ENCODE measurements at regions of chr14 and their contacts with region 1.

Region 1: DNA sequence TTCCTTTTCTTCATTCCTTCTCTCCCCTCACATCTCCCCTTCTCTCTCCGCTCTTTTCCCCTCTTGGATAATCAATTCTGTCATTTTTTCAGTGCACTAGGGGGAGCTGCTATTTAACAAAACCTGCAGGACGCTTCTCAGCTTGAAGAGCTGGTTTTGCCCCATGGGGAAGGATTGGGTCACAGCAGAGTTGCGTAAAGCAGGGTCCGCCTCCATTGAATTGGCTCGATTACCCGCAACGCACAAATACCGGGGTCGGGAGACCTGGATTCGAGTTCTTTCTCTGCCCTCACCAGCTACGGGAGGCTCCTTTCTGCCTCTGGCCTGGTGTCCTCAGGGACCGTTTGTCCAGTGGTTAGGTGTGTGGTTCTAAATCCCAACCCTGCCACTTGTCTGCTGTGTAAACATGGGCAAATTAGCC is 42.1 kb upstream of the CHGA start:
- DNase-seq: peak; percentile 43 to 75 (median 73)
- ATAC-seq: peak; percentile 68 to 80 (median 74)
- H3K4me3 ChIP-seq: peak overlapping the region in 2 of 3 donors; percentile 10 to 20
- H3K27ac ChIP-seq: peak overlapping the region in 1 of 3 donors; percentile 22
- H3K4me1 ChIP-seq: peaks cover 0 to 22% (median 10%) of the 10 kb centered on the region in 4 donors
- H3K27me3 ChIP-seq: no peaks in the 10 kb centered on the region
- CTCF ChIP-seq: peak; percentile 42 to 67 (median 58)
- POLR2A ChIP-seq: no peak

Region 2: DNA sequence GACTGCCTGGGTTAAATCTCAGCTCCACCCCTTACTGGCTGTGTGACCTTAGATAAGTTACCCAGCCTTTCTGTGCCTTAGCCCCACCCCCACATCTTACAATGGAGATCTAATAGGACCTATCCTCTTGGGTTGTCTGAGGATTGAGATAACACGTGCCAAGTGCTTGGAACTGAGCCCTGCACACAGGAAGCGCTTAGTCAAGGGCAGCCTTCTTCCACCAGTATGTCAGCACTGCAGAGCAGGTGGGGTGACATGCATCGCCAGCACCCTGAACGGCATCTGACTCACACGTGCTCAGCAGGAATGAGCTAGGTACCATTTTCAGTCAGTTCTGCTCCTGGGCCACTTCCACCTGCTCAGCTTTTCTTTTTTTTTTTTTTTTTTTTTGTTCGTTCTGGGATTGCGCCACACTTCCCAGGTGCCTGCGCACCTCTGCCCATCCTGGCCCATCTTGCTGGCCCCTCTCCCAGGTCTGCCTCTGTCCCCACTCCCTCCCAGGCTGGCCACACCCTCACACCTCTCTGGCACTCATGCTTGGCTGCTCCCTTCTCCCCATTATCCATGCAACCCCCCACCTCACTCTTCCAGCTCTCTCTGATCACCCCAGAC is 152.0 kb before region 1 on chr14:
- intact Hi-C with region 1: no loop called
- DNase-seq: no peak
- ATAC-seq: peak in 3 of 4 donors; percentile 8 to 14 (median 11)
- H3K4me3 ChIP-seq: no peak overlapping the region
- H3K27ac ChIP-seq: no peak overlapping the region
- H3K4me1 ChIP-seq: no peaks in the 10 kb centered on the region
- H3K27me3 ChIP-seq: no peaks in the 10 kb centered on the region
- CTCF ChIP-seq: no peak
- POLR2A ChIP-seq: no peak

Region 3: DNA sequence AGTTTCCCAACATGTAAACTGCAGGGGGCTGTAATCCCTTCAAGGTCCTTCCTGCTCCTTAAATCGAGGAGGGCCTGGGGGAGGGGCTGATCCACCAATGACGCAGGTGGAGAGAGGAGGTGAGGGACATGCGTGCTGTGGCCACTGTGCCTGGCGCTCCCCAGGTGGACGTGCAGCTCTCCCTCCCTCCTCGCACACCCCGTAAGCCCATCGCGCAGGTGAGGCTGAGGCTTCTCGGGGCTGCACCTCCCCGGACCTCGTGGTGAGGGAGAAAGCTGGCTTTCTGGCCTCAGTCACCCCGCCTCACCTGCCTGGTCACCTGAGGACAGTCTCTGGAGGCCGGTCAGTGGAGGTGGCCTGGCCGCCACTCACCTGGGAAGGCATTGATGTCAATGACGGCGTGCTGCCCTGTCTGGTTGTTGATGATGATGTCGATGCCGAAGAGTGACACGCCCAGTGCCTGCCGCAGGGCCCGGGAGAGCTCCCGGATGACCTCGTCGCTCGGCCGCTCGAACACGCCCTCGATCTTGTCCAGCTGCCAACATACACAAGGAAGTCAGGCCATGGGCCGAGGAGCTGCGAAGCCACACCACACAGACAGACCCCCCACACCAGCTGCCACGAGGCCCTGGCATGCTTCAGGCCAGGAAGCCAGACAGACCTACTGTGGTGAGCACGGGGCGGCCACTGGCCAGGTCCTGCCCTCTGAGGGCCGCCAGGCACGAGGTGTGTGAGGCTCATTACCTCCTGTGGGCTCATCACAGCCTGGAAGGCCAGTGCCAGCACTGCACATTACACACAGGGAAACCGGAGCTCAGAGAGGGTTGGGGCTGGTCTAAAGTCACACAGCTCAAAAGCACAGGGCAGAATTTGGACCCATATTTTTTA is 65.3 kb after region 1 on chr14:
- intact Hi-C with region 1: loop called in 1 of 2 experiments (anchors 10 kb)
- DNase-seq: peak; percentile 84 to 88 (median 88)
- ATAC-seq: peak; percentile 77 to 90 (median 86)
- H3K4me3 ChIP-seq: no peak overlapping the region
- H3K27ac ChIP-seq: no peak overlapping the region
- H3K4me1 ChIP-seq: peaks cover 0 to 8% (median 4%) of the 10 kb centered on the region in 4 donors
- H3K27me3 ChIP-seq: no peaks in the 10 kb centered on the region
- CTCF ChIP-seq: no peak
- POLR2A ChIP-seq: no peak

Measured in right lobe of liver (tissue), 6 donors.